Transverse colon (tissue), 4 donors: ENCODE measurements at regions of chr1 and their contacts with region 1.

Region 1: DNA sequence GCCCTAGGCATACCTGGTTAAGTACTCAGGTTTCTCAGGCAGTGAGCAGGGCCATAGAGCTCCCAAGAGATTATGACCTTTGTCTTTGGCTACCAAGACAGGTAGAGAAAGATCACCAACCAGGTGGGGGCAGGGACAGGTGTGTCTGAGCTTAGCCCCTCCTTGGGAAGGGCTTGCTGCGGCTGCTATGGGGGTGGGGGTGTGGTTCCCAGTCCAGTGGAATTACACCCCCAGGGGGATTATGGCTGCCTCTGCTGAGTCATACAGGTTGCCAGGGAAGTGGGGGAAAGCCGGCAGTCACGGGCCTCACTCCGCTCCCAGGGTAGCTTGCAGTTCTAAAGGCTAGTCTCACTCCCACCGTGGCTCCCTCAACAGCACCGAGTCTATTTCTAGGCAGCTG is 65.2 kb upstream of the FAM163A start:
- DNase-seq: no peak
- H3K4me3 ChIP-seq: no peak overlapping the region
- H3K27ac ChIP-seq: no peak overlapping the region
- H3K4me1 ChIP-seq: no peaks in the 10 kb centered on the region
- H3K27me3 ChIP-seq: no peaks in the 10 kb centered on the region
- CTCF ChIP-seq: no peak
- EP300 ChIP-seq: no peak
- POLR2A ChIP-seq: no peak

Region 2: GRCh38 chr1:178412400-178412770 is 1265.5 kb before region 1 on chr1:
- in situ Hi-C with region 1: no loop called
- intact Hi-C with region 1: loop called (anchors 5 kb)
- DNase-seq: no peak
- H3K4me3 ChIP-seq: no peak overlapping the region
- H3K27ac ChIP-seq: no peak overlapping the region
- H3K4me1 ChIP-seq: no peaks in the 10 kb centered on the region
- H3K27me3 ChIP-seq: no peaks in the 10 kb centered on the region
- CTCF ChIP-seq: no peak
- EP300 ChIP-seq: no peak
- POLR2A ChIP-seq: no peak

Region 3: DNA sequence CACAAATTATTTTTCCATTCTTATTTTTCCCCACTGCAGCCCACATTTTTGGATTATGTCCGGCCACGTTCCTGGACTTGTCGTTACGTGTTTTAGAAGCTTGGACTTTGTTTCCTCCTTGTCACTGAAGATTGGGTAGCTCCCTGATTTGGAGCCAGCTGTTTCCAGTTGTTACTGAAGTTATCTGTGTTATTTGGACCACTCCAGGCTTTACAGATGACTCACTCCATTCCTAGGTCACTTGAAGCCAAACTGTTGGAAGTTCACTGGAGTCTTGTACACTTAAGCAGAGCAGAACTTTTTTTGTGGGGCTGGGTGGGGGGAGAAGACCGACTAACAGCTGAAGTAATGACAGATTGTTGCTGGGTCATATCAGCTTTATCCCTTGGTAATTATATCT is 324.4 kb before region 1 on chr1:
- in situ Hi-C with region 1: no loop called
- intact Hi-C with region 1: no loop called
- DNase-seq: no peak
- H3K4me3 ChIP-seq: no peak overlapping the region
- H3K27ac ChIP-seq: peak overlapping the region in 3 of 4 donors; percentile 32 to 42 (median 39)
- H3K4me1 ChIP-seq: no peaks in the 10 kb centered on the region
- H3K27me3 ChIP-seq: no peaks in the 10 kb centered on the region
- CTCF ChIP-seq: no peak
- EP300 ChIP-seq: no peak
- POLR2A ChIP-seq: no peak